B cell (primary cell): ENCODE measurements at regions of chr13 and their contacts with region 1.

Region 1: GRCh38 chr13:48265217-48265815 is 32.3 kb downstream of the ITM2B start:
- DNase-seq: peak; percentile 73
- ATAC-seq: peak; percentile 91
- H3K4me3 ChIP-seq: peak overlapping the region in 3 of 5 experiments; percentile 29 to 53 (median 31)
- H3K4me3 Mint-ChIP-seq: peak overlapping the region; percentile 86
- H3K27ac ChIP-seq: peak overlapping the region; percentile 67 to 80
- H3K27ac Mint-ChIP-seq: peak overlapping the region; percentile 92
- H3K4me1 ChIP-seq: peaks cover 44 to 47% of the 10 kb centered on the region in 2 donors
- H3K4me1 Mint-ChIP-seq: peaks cover 51% of the 10 kb centered on the region
- H3K27me3 ChIP-seq: no peaks in the 10 kb centered on the region
- H3K27me3 Mint-ChIP-seq: no peaks in the 10 kb centered on the region
- CTCF ChIP-seq: no peak

Region 2: GRCh38 chr13:48291730-48292129 is 26.4 kb after region 1 on chr13:
- CTCF ChIA-PET with region 1: no interaction called
- POLR2A ChIA-PET with region 1: no interaction called
- intact Hi-C with region 1: loop called (anchors 2 kb)
- DNase-seq: no peak
- ATAC-seq: no peak
- H3K4me3 ChIP-seq: no peak overlapping the region
- H3K4me3 Mint-ChIP-seq: no peak overlapping the region
- H3K27ac ChIP-seq: no peak overlapping the region
- H3K27ac Mint-ChIP-seq: no peak overlapping the region
- H3K4me1 ChIP-seq: peaks cover 14% of the 10 kb centered on the region in 2 donors
- H3K4me1 Mint-ChIP-seq: peaks cover 19% of the 10 kb centered on the region
- H3K27me3 ChIP-seq: no peaks in the 10 kb centered on the region
- H3K27me3 Mint-ChIP-seq: peaks cover 5% of the 10 kb centered on the region
- CTCF ChIP-seq: no peak

Region 3: GRCh38 chr13:48318821-48319511 is 53.6 kb after region 1 on chr13:
- CTCF ChIA-PET with region 1: interaction called, 5 read pairs
- POLR2A ChIA-PET with region 1: no interaction called
- intact Hi-C with region 1: loop called (anchors 2 kb)
- DNase-seq: peak; percentile 48
- ATAC-seq: peak; percentile 19
- H3K4me3 ChIP-seq: peak overlapping the region in 4 of 5 experiments; percentile 25 to 47 (median 38)
- H3K4me3 Mint-ChIP-seq: peak overlapping the region; percentile 81
- H3K27ac ChIP-seq: no peak overlapping the region
- H3K27ac Mint-ChIP-seq: peak overlapping the region; percentile 2
- H3K4me1 ChIP-seq: peaks cover 3 to 35% of the 10 kb centered on the region in 2 donors
- H3K4me1 Mint-ChIP-seq: peaks cover 44% of the 10 kb centered on the region
- H3K27me3 ChIP-seq: no peaks in the 10 kb centered on the region
- H3K27me3 Mint-ChIP-seq: no peaks in the 10 kb centered on the region
- CTCF ChIP-seq: no peak

Region 4: DNA sequence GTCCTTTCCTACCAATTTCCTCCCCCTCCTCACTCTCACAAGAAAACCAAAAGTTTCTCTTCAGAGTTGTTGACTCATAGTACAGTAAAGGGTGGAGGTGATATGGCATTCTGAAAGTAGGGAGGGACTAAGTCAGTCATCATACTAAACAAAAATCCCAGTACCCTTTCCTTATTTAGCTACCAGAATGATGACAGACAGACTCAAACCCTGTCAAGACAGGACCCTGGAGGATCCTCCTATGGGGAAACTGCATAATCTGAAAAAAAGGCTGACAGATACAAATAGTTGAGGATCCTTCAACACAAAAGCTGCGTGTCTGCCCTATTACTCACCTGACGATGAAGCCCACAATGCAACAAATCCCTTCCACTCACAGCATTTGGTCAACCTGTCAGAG is 443.9 kb after region 1 on chr13:
- CTCF ChIA-PET with region 1: no interaction called
- POLR2A ChIA-PET with region 1: no interaction called
- intact Hi-C with region 1: no loop called
- DNase-seq: no peak
- ATAC-seq: no peak
- H3K4me3 ChIP-seq: no peak overlapping the region
- H3K4me3 Mint-ChIP-seq: no peak overlapping the region
- H3K27ac ChIP-seq: no peak overlapping the region
- H3K27ac Mint-ChIP-seq: no peak overlapping the region
- H3K4me1 ChIP-seq: no peaks in the 10 kb centered on the region
- H3K4me1 Mint-ChIP-seq: no peaks in the 10 kb centered on the region
- H3K27me3 ChIP-seq: peaks cover 0 to 4% (median 0%) of the 10 kb centered on the region in 4 experiments
- H3K27me3 Mint-ChIP-seq: peaks cover 21% of the 10 kb centered on the region
- CTCF ChIP-seq: no peak